Posterior vena cava (tissue), 2 donors: ENCODE measurements at regions of chr18 and their contacts with region 1.

Region 1: GRCh38 chr18:35851286-35851970 is 121.1 kb upstream of the RMP24 start:
- DNase-seq: no peak

Region 2: DNA sequence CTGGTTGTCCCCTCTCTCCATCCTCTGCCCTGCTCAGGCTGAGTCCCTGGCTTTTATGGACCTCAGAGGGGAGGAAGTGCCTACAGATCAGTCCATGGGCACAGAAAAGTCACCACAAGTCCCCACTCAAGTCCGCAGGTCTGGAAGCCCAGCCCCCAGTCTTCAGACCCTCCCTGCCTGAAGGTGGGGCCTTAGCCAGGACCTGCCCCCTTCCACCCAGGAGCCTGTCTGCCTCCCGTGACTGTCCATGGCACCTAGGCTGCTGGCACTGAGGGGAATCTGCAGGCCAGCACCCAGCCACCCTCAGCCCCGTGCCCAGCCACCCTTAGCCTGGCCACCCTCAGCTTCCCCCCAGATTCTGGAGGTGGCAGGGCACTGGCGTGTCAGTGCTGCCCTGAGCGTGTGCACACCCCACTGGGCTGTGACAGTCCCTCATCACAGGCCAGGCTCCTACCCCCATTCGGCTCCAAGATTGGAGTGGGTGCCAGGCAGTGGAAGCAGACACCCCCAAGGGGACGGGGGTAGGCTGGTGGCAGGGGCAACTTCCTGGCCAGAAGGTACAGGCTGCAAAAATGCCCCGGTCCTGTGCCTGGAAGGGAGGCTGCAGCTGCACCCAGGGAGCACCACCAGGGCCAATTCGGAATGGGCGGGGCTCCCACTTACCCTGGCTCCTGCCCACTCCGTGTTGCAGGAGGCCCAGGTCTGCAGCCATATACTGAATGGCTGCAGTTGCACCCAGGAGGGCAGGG is 33.6 kb before region 1 on chr18:
- intact Hi-C with region 1: no loop called
- DNase-seq: no peak

Region 3: DNA sequence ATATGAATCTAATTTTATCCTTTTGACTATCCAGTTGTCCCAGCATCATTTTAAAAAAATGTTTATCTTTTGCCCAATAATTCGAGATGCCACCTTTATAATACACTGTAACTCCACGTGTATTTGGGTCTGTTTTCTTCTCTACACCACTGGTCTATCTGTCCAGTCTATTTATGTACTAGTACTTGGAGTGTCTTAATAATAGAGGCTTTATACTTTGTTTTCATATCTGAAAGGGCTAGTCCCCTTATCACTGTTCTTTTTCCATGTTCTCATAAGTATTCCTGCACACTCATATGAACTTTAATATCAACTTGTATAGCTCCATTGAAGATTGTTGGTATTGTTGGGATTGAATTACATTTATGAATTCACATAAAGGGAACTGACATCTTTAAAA is 19.9 kb after region 1 on chr18:
- intact Hi-C with region 1: loop called in 1 of 2 experiments (anchors 1 kb)
- DNase-seq: no peak

Region 4: GRCh38 chr18:35888329-35888728 is 36.9 kb after region 1 on chr18:
- intact Hi-C with region 1: no loop called
- DNase-seq: no peak